Activated CD8-positive, alpha-beta T cell treated with anti-CD3 and anti-CD28 coated beads, Interleukin-2, amount 10 ng/mL, durations not matched to agents 7 days and 5 days (primary cell): ENCODE measurements at regions of chr6 and their contacts with region 1.

Region 1: DNA sequence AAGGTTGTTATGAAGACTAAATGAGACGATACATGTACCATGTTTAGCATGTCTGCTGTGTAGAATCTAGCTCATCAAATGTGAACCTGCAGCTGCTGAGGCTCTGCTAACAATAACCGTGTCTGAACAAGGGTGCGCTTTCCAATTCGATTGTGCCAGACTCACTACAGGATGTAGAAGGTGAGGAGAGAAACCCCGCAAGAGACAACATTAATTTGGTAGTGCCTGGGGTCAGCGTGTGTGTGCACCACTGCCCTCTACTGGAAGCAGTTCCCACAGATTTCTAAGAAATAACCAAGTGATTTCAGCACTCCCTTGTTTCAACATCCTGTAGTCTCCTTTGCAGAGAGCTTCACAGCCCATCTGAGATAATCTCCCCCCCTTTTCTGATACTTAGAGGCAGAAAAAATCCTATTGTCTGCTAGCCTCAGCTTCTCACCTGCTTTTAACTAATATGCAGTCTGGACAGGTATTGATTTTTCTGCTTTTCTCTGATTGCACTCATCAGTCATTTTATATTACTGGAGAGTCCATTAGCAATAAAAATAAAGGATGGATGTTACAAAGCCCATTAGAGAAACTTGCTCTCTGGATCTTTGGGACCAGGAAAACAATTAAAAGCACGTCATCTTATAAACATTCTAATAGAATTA is 96.7 kb upstream of the BACH2 start:
- DNase-seq: peak; percentile 89
- ATAC-seq: peak; percentile 74
- H3K4me3 Mint-ChIP-seq: no peak overlapping the region
- H3K27ac Mint-ChIP-seq: peak overlapping the region; percentile 64
- H3K4me1 Mint-ChIP-seq: peaks cover 52% of the 10 kb centered on the region
- H3K27me3 Mint-ChIP-seq: no peaks in the 10 kb centered on the region

Region 2: DNA sequence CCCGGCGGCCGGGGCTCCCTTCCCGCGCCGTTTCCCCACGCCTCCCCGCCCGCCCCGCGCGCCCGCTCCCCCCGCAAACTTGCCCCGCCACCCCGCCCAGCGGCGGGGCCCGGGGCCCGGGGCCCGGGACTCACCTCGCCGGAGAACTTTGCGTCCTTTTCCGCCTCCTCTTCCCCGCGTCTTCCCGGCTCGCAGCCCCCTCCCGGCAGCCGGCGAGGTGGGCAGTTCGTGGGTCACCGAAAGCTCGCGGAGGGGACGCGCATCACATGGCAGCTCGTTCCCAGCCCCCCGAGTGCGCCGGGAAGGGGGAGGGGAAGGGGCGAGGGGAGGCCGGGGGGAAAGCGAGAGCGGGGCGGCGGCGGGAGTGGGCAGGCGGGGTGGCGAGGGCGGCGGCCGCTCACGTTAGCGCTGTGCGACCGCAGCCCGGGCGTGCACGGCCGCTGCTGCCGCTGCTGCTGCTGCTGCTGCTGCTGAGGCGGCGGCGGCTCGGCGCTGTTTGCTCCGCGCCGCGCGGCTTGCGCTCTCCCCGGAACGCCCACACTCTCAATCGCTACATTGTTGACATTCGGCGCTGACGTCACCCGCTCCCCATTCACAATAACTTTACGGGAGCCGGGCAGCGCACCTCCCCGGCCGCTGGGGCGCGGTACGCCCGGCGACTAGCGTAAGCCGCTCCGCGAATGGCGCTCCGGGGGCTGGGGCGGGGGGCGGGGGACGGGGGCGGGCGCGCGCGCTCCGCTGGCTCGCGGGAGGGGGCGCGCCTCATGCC is 96.8 kb before region 1 on chr6 and contains the start of gene BACH2:
- CTCF ChIA-PET with region 1: interaction called, 46 read pairs
- POLR2A ChIA-PET with region 1: interaction called, 11 read pairs
- DNase-seq: peak; percentile 96
- ATAC-seq: peak; percentile 74
- H3K4me3 Mint-ChIP-seq: peak within 1 kb of the TSS; percentile 81
- H3K27ac Mint-ChIP-seq: peak within 1 kb of the TSS; percentile 84
- H3K4me1 Mint-ChIP-seq: peaks cover 32% of the 10 kb centered on the region
- H3K27me3 Mint-ChIP-seq: peaks cover 17% of the 10 kb centered on the region
- total RNA-seq, gene BACH2: 61.3 to 70.9 TPM

Region 3: DNA sequence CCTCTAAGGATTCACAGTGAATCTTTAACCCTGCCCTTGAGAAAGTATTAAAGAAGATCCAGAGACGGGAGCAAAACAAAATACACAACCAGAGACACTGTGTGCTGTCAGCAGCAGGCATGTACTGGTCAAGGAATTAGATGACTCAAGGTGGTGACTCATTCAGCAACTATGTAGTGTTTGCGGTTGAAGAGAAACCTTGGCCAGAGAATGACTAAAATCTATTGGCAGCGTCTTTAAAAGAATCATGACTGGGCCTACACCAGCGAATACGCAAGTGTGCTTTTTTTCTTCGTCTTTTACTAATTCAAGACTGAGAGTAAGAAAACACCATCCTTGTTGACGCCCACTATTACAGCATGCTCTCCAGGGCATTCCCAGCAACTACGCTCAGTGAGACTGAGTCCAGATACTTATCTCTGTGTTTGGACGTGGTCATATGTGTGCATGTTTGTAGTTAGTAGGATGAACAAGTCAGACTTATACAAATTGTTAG is 24.3 kb before region 1 on chr6:
- CTCF ChIA-PET with region 1: interaction called, 27 read pairs
- POLR2A ChIA-PET with region 1: interaction called, 4 read pairs
- DNase-seq: peak; percentile 47
- ATAC-seq: peak; percentile 81
- H3K4me3 Mint-ChIP-seq: no peak overlapping the region
- H3K27ac Mint-ChIP-seq: no peak overlapping the region
- H3K4me1 Mint-ChIP-seq: peaks cover 21% of the 10 kb centered on the region
- H3K27me3 Mint-ChIP-seq: peaks cover 10% of the 10 kb centered on the region

Region 4: GRCh38 chr6:90413867-90414266 is 20.5 kb after region 1 on chr6:
- CTCF ChIA-PET with region 1: interaction called, 24 read pairs
- POLR2A ChIA-PET with region 1: interaction called, 60 read pairs
- DNase-seq: peak; percentile 87
- ATAC-seq: peak; percentile 92
- H3K4me3 Mint-ChIP-seq: peak overlapping the region; percentile 56
- H3K27ac Mint-ChIP-seq: peak overlapping the region; percentile 93
- H3K4me1 Mint-ChIP-seq: peaks cover 67% of the 10 kb centered on the region
- H3K27me3 Mint-ChIP-seq: no peaks in the 10 kb centered on the region

Region 5: GRCh38 chr6:90458353-90459224 is 65.2 kb after region 1 on chr6:
- CTCF ChIA-PET with region 1: interaction called, 24 read pairs
- POLR2A ChIA-PET with region 1: interaction called, 5 read pairs
- DNase-seq: peak; percentile 71
- ATAC-seq: peak; percentile 86
- H3K4me3 Mint-ChIP-seq: peak overlapping the region; percentile 51
- H3K27ac Mint-ChIP-seq: peak overlapping the region; percentile 87
- H3K4me1 Mint-ChIP-seq: peaks cover 63% of the 10 kb centered on the region
- H3K27me3 Mint-ChIP-seq: no peaks in the 10 kb centered on the region

Region 6: DNA sequence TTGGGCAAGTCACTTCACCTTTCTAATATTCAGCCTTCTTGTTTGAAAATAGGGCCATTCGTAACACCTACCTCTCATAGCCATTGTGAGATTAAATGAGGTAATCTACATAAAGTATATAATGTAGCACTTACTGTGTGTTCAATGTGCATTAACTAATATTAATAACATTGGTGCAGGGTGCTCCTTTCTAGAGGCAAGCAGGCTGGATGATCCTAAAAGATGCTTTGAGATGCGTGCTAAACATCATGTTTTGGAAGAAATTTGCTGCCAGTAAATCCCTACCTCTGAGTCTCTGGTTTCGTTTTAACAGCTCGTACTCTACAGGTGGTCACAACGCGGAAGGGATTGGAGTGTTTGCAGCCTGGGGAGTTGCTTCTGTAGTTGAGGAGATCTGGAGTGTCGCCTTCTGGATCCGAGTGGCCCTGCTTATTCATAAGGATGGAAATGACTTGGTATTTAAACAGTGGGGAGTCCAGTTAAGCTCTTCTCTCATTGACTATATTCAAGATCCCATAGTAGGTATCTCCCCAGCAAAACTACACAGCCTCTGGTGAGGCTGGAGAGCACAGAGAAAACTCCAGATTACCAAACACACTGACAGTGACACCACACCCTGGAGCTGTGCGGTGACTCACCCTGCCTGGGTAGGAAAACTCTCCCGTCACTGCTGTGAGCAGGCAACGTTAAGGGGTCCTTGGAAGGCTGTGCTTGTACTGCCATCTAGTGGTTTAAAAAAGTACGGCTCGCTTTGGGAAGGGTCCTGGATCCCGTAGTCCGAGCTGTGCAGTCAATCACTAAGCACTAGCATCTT is 85.6 kb after region 1 on chr6:
- CTCF ChIA-PET with region 1: interaction called, 170 read pairs
- POLR2A ChIA-PET with region 1: interaction called, 28 read pairs
- DNase-seq: peak; percentile 86
- ATAC-seq: peak; percentile 94
- H3K4me3 Mint-ChIP-seq: no peak overlapping the region
- H3K27ac Mint-ChIP-seq: peak overlapping the region; percentile 15
- H3K4me1 Mint-ChIP-seq: peaks cover 57% of the 10 kb centered on the region
- H3K27me3 Mint-ChIP-seq: no peaks in the 10 kb centered on the region

Region 7: DNA sequence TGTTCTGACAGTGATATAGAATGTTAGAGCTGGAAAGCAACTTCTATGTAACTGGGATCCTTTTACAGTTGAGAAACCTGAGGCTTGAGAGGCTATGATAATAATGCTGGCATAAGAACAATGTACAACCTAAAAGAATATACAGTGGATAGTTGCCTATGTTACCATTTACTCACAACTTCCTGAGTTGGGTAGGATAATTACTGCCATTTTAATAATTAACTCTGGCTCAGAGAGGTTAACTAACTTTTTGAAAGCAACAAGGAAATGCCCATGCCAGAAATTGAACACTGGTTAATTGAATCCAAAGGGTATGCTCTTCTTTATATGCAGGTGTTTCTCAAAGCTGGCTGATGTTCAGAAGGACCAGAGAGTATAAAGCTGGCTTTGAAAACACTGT is 724.2 kb after region 1 on chr6:
- CTCF ChIA-PET with region 1: no interaction called
- POLR2A ChIA-PET with region 1: no interaction called
- DNase-seq: no peak
- ATAC-seq: no peak
- H3K4me3 Mint-ChIP-seq: no peak overlapping the region
- H3K27ac Mint-ChIP-seq: no peak overlapping the region
- H3K4me1 Mint-ChIP-seq: no peaks in the 10 kb centered on the region
- H3K27me3 Mint-ChIP-seq: no peaks in the 10 kb centered on the region